Activated CD8-positive, alpha-beta T cell treated with anti-CD3 and anti-CD28 coated beads, Interleukin-2, amount 10 ng/mL, durations not matched to agents 7 days and 5 days (primary cell): ENCODE measurements at regions of chr4 and their contacts with region 1.

Region 1: DNA sequence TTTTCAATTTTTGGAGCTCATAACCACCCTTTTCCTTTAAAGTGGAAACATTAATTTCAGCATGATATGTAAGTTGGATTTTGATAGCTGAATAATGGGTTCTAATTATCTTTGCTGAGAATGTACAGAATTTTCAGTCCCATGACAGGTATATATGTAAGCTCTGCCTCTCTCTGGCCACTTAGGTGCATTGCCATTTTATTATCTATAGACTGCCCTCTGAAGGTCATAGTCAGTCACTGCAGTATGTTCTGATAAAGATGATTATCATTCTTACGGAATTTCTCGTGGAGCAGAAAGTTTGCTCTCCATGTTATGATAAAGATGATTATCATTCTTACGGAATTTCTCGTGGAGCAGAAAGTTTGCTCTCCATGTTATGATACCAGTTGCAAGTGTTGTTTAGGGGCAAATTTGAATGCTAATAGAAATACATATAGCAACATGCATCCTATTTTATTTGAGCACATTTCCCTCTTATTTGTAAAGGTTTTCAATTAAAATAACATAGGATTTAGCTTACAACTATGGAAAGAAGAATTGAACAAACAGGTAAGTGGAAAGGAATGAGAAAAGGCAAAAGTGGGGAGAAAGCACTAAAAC is 10.4 kb downstream of the AFP start:
- DNase-seq: peak; percentile 22
- ATAC-seq: peak; percentile 82
- H3K4me3 Mint-ChIP-seq: no peak overlapping the region
- H3K27ac Mint-ChIP-seq: no peak overlapping the region
- H3K4me1 Mint-ChIP-seq: no peaks in the 10 kb centered on the region
- H3K27me3 Mint-ChIP-seq: peaks cover 3% of the 10 kb centered on the region

Region 2: DNA sequence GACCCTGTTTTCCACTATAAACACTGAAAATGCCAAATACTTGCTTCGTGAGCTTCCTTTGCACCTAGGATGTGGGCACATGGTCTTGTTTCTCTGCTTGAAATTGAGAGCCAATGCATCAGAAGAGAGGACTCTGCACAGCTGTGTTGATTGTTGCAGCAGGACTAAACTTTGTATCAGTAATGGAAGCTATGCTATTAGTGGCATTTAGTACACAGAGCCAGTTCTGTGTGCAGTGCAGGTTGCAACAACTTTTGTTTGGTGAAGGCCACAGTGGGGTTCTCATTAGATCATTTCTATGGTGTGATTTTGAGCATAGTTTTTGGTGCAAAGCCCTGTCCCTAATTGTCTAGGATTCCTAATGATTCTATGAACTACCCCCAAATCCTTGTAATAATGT is 133.5 kb before region 1 on chr4:
- CTCF ChIA-PET with region 1: interaction called, 12 read pairs
- POLR2A ChIA-PET with region 1: no interaction called
- DNase-seq: no peak
- ATAC-seq: no peak
- H3K4me3 Mint-ChIP-seq: no peak overlapping the region
- H3K27ac Mint-ChIP-seq: no peak overlapping the region
- H3K4me1 Mint-ChIP-seq: no peaks in the 10 kb centered on the region
- H3K27me3 Mint-ChIP-seq: no peaks in the 10 kb centered on the region

Region 3: DNA sequence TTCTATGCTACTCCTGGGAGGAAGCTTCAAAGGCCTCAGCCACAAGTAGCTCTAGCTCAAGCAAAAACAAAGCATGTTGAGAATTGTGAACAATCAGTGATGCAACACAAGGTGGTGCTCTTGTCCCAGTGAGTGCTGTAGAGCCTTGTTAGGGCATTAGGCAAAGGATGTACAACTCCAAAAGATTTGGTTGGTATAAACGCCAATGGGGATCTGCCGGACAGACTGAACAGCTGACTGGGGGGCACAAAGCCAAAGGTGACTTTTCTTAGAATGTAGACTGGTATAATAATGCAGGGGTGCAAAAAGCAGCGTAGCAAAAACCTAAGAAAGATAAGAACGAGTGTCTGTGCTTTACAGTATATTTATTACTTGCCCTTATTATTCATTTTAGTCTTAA is 105.0 kb before region 1 on chr4:
- CTCF ChIA-PET with region 1: interaction called, 10 read pairs
- POLR2A ChIA-PET with region 1: no interaction called
- DNase-seq: peak; percentile 25
- ATAC-seq: no peak
- H3K4me3 Mint-ChIP-seq: no peak overlapping the region
- H3K27ac Mint-ChIP-seq: no peak overlapping the region
- H3K4me1 Mint-ChIP-seq: no peaks in the 10 kb centered on the region
- H3K27me3 Mint-ChIP-seq: no peaks in the 10 kb centered on the region

Region 4: DNA sequence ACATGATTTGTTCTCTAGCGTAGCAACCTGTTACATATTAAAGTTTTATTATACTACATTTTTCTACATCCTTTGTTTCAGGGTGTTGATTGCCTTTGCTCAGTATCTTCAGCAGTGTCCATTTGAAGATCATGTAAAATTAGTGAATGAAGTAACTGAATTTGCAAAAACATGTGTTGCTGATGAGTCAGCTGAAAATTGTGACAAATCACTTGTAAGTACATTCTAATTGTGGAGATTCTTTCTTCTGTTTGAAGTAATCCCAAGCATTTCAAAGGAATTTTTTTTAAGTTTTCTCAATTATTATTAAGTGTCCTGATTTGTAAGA is 39.9 kb before region 1 on chr4:
- CTCF ChIA-PET with region 1: no interaction called
- POLR2A ChIA-PET with region 1: no interaction called
- DNase-seq: no peak
- ATAC-seq: no peak
- H3K4me3 Mint-ChIP-seq: no peak overlapping the region
- H3K27ac Mint-ChIP-seq: no peak overlapping the region
- H3K4me1 Mint-ChIP-seq: no peaks in the 10 kb centered on the region
- H3K27me3 Mint-ChIP-seq: no peaks in the 10 kb centered on the region